ENCODE measurements at regions of chrX and their contacts with region 1.

Region 1: GRCh38 chrX:14029425-14030173 is at the start of gene GEMIN8:
- DNase-seq: peak; percentile 88
- H3K4me3 Mint-ChIP-seq: peak within 1 kb of the TSS; percentile 76
- H3K27ac Mint-ChIP-seq: peak within 1 kb of the TSS; percentile 91
- H3K4me1 Mint-ChIP-seq: peaks cover 40% of the 10 kb centered on the region
- H3K27me3 Mint-ChIP-seq: no peaks in the 10 kb centered on the region
- CTCF ChIP-seq: no peak
- total RNA-seq, gene GEMIN8: 21.7 and 22.5 TPM in 2 replicates

Region 2: DNA sequence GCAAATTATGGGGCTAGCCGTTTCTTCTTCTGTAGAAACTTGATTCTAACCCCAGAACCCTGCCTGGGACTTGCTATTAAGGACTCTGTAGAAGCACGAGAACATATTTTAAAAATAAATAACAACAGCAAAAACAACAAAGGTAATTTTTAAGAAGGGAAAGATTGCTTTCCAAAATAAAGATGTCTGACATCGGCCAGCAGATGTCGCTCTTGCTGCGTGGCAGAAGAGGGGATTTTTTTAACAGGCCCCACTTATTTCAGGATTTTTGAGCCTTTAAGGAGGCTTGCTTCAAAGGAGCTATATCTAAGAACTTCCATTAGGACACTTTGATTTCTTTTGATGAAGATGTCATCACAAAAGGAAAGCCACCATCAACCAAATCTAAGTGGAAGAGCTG is 523.0 kb before region 1 on chrX:
- CTCF ChIA-PET with region 1: interaction called, 4 read pairs
- intact Hi-C with region 1: loop called (anchors 1 kb)
- DNase-seq: peak; percentile 42
- H3K4me3 Mint-ChIP-seq: no peak overlapping the region
- H3K27ac Mint-ChIP-seq: no peak overlapping the region
- H3K4me1 Mint-ChIP-seq: no peaks in the 10 kb centered on the region
- H3K27me3 Mint-ChIP-seq: no peaks in the 10 kb centered on the region
- CTCF ChIP-seq: peak; percentile 41

Region 3: GRCh38 chrX:13653022-13653693 is 376.4 kb before region 1 on chrX and contains the start of gene TCEANC:
- CTCF ChIA-PET with region 1: no interaction called
- intact Hi-C with region 1: loop called (anchors 2 kb)
- DNase-seq: peak; percentile 95
- H3K4me3 Mint-ChIP-seq: peak within 1 kb of the TSS; percentile 80
- H3K27ac Mint-ChIP-seq: peak within 1 kb of the TSS; percentile 81
- H3K4me1 Mint-ChIP-seq: peaks cover 15% of the 10 kb centered on the region
- H3K27me3 Mint-ChIP-seq: no peaks in the 10 kb centered on the region
- CTCF ChIP-seq: no peak
- total RNA-seq, gene TCEANC: 1.7 and 2.1 TPM in 2 replicates

Region 4: GRCh38 chrX:13750204-13750603 is 279.4 kb before region 1 on chrX:
- CTCF ChIA-PET with region 1: no interaction called
- intact Hi-C with region 1: loop called (anchors 1 kb)
- DNase-seq: peak; percentile 19
- H3K4me3 Mint-ChIP-seq: no peak overlapping the region
- H3K27ac Mint-ChIP-seq: no peak overlapping the region
- H3K4me1 Mint-ChIP-seq: peaks cover 14% of the 10 kb centered on the region
- H3K27me3 Mint-ChIP-seq: no peaks in the 10 kb centered on the region
- CTCF ChIP-seq: no peak

Region 5: GRCh38 chrX:13774696-13775095 is 254.9 kb before region 1 on chrX:
- CTCF ChIA-PET with region 1: interaction called, 4 read pairs
- intact Hi-C with region 1: loop called (anchors 5 kb)
- DNase-seq: no peak
- H3K4me3 Mint-ChIP-seq: no peak overlapping the region
- H3K27ac Mint-ChIP-seq: no peak overlapping the region
- H3K4me1 Mint-ChIP-seq: peaks cover 17% of the 10 kb centered on the region
- H3K27me3 Mint-ChIP-seq: no peaks in the 10 kb centered on the region
- CTCF ChIP-seq: no peak

Region 6: GRCh38 chrX:13938051-13938828 is 91.4 kb before region 1 on chrX:
- CTCF ChIA-PET with region 1: no interaction called
- intact Hi-C with region 1: loop called (anchors 10 kb)
- DNase-seq: peak; percentile 72
- H3K4me3 Mint-ChIP-seq: peak overlapping the region; percentile 80
- H3K27ac Mint-ChIP-seq: no peak overlapping the region
- H3K4me1 Mint-ChIP-seq: no peaks in the 10 kb centered on the region
- H3K27me3 Mint-ChIP-seq: peaks cover under 1% of the 10 kb centered on the region
- CTCF ChIP-seq: no peak

Region 7: DNA sequence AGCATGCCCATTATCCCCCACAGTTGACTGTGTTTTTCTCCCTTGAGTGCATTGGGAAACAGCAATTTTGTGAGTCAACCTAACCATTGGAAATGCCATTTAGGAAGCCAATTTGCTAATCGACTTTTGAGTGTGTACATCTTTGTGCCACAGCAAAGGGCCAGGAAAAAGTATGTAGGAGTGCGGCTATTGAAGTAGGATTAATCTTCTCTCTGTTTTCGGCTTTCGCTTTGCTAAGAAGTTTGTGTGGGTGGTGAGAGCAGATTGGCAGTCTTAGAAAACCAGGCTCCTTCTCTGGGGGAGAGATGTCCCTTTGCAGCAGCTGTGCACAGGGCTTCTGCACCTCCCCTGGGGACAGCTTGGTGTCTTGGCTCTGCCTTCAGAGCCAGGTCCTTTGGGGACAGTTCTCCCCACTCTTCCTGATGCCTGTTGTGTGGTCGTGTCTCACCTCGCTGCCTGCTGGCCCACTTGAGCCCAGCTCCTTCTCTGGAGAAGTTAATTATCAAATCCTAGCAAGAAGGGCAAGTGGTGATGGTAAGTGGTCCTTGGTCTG is 74.4 kb before region 1 on chrX:
- CTCF ChIA-PET with region 1: no interaction called
- intact Hi-C with region 1: no loop called
- DNase-seq: no peak
- H3K4me3 Mint-ChIP-seq: no peak overlapping the region
- H3K27ac Mint-ChIP-seq: no peak overlapping the region
- H3K4me1 Mint-ChIP-seq: no peaks in the 10 kb centered on the region
- H3K27me3 Mint-ChIP-seq: peaks cover 28% of the 10 kb centered on the region
- CTCF ChIP-seq: no peak

Measured in Calu3 (cell line).